ENCODE measurements at regions of chr3 and their contacts with region 1.

Region 1: DNA sequence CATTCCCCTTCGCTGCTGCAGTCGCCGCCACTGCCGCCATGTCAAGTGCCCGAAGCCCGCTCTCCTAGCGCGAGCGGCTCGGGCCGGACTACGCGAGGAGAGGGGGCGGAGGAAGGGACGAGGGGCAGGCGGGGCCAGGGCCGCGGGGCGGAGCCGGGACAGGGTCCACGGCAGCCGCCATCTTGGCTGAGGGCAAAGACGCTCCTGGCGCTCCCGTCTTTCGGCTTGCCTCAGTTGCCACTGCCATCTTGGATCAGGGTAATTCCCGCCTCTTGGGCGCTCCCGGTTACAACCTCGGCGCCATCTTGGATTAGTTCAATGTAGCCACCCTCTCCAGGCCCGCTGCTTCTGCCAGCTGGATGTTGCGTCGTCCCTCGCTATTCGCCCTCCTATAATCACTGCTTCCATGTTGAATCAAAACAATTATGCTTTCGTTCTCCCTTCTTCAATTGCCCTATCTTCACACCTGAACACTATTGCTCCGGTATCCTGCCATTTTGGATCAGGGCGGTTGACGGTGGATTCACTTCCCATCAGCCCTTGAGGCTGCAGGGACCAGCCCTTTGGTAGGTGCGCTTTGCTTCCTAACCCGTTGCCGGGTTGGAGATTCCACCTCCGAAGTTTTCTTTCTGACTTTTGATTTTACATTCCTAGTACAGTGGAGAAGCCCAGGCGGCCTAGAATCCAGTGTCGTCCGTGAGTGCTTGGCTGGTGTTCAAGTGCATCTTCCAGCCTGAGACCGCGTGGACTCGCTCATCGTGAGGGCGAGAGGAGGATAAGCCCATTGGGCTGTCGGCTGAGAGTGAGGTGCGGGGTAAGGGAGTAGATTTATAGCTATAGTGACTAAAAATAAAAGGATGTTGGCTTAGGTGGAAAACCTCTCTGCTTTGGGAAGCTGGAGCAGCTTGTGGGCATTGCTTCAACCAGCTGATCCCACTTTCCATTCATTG is at the start of gene HACD2:
- DNase-seq: peak; percentile 93

Region 2: GRCh38 chr3:123568034-123568433 is 17.2 kb before region 1 on chr3:
- CTCF ChIA-PET with region 1: no interaction called
- POLR2A ChIA-PET with region 1: no interaction called
- DNase-seq: no peak

Region 3: DNA sequence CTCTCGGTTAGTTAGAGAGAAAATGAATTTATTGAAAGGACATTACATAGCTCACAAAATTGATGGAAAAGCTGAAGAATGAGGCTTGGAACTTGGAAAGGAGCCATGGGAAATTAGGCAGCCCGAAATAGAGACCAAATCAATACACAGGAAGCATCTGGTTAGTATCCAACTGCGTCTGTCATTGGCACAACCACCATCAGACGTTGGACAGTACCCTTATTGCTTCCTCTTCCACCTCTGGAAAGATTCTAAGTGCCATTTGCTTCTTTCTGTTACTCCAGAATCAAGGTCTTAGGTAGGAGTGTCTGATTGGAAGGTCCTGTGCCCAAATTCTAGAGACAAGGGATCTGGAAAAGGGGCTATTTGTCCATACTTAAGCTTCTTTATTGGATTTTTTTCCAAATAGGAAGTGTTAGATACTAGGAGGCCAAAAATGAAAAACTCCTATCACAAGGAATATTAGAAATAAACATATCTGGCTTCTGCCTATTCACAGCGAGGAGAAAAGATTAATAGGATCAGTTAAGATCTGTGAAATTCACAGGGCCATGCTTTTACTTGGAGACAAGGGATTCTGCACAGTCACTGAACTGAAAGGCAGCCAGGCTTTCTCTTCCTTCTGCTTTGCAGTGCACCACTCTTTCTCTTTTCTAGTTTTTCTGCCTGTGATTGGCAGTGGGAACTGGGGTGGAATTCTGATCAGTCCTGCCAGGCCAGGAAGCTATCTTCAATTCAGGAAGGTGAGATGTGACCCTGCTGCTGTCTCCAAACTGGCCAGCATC is 10.3 kb after region 1 on chr3:
- CTCF ChIA-PET with region 1: no interaction called
- POLR2A ChIA-PET with region 1: interaction called, 11 read pairs
- DNase-seq: no peak

Measured in HEK293T (cell line).